K562 (cell line): ENCODE measurements at regions of chr20 and their contacts with region 1.

Region 1: GRCh38 chr20:34250005-34250404 is 8.8 kb downstream of the ASIP start:
- DNase-seq: no peak
- ATAC-seq: no peak
- H3K4me3 ChIP-seq: no peak overlapping the region
- H3K27ac ChIP-seq: no peak overlapping the region
- H3K4me1 ChIP-seq: peaks cover 6 to 15% of the 10 kb centered on the region in 2 experiments; a peak in 3 of 5 replicates
- H3K27me3 ChIP-seq: no peaks in the 10 kb centered on the region
- CTCF ChIP-seq: no peak
- EP300 ChIP-seq: no peak
- POLR2A ChIP-seq: no peak
- RAD21 ChIP-seq: no peak

Region 2: DNA sequence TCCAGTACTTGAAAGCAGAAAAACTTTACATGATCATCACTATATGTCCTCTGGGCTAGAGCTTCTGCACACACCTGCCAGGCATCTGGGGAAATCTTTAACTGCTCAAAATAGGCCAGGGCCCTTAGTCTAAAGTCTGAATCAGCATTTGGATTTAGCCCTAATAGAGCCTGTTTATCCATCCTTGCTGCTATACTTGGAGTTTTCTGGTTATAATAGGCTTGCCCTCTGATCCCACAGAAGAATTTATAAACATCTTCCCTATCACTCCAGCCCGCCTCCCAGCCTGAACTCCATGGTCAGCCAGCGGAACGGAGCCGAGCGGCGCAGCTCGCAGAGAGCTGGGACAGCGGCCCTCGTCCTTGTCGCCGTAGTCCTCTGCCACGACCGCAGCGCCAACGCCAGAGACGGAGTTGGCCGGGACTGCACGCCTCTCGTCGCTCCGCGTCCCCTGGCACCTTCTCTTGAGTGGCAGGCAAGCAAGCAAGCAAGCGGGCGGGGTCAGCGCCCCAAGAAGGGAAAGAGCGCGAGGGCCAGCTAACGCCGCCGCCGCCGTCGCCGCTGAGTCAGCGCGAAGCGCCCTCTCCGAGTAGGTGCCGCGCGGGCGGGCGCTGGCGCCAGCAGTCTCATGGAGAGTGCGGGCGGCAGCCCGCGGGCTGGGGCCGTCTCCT is 34.2 kb before region 1 on chr20:
- CTCF ChIA-PET with region 1: no interaction called
- POLR2A ChIA-PET with region 1: no interaction called
- in situ Hi-C with region 1: loop called (anchors 5 kb)
- intact Hi-C with region 1: no loop called
- DNase-seq: peak; percentile 64 to 83 (median 67)
- ATAC-seq: peak; percentile 99
- H3K4me3 ChIP-seq: peak overlapping the region; percentile 30
- H3K27ac ChIP-seq: peak overlapping the region; percentile 69; the same call in 2 of the 3 replicates
- H3K4me1 ChIP-seq: peaks cover 5 to 6% of the 10 kb centered on the region in 2 experiments; a peak in 3 of 5 replicates
- H3K27me3 ChIP-seq: no peaks in the 10 kb centered on the region
- CTCF ChIP-seq: no peak
- EP300 ChIP-seq: no peak
- POLR2A ChIP-seq: peak; percentile 70
- RAD21 ChIP-seq: no peak